CD4-positive, alpha-beta memory T cell (primary cell): ENCODE measurements at regions of chr3 and their contacts with region 1.

Region 1: DNA sequence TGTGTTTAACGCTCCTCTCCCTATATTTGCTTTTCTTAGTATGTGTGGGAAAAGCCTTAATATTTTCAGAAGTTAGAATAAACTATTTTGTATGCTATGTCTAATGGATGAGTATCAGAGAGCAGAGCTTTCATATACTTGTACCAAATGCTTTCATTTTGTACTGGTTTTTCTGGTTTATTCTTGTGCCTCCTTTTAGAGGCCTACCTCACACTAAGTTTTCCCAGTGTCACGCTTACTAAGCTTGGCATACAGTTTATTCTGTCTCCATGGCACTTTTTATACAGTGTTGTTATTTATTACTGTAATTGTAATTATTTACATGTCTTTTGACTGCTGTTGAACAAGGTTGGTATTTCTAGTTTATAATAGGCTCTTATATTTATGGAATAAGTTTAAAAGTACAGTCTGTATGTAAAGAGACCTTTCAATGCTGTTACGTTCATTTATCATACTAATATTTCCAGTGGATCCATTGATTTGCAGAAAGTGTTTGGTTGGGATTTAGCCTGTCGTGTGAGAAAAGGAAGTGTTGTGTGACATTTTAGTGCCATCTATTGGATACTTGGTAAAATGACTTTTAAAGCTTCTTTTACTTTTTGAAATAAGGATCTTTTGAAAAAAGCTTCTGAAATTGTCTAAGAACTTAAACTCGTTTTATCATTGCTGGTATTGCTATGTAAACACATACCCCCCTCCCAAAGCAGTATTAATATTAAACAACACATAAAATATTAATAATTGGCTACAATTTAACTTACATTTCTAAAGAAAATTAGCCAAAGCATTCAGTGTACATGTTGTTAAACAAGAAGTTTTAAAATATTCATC is 5.2 kb upstream of the EBLN2 start:
- DNase-seq: peak in 4 of 5 donors; percentile 28 to 47 (median 38)
- H3K4me3 ChIP-seq: no peak overlapping the region
- H3K4me3 Mint-ChIP-seq: no peak overlapping the region
- H3K27ac ChIP-seq: no peak overlapping the region
- H3K27ac Mint-ChIP-seq: peak overlapping the region in 6 of 7 donors; percentile 0 to 80 (median 33)
- H3K4me1 ChIP-seq: peaks cover 9% of the 10 kb centered on the region
- H3K4me1 Mint-ChIP-seq: peaks cover 18 to 21% (median 19%) of the 10 kb centered on the region in 4 donors
- H3K27me3 ChIP-seq: no peaks in the 10 kb centered on the region
- H3K27me3 Mint-ChIP-seq: no peaks in the 10 kb centered on the region

Region 2: GRCh38 chr3:72847751-72848702 is 208.2 kb before region 1 on chr3 and contains the start of gene SHQ1:
- CTCF ChIA-PET with region 1: interaction called, 8 read pairs
- POLR2A ChIA-PET with region 1: no interaction called
- intact Hi-C with region 1: loop called (anchors 10 kb)
- DNase-seq: peak; percentile 91 to 96 (median 92)
- H3K4me3 ChIP-seq: peak within 1 kb of the TSS; percentile 82 to 97
- H3K4me3 Mint-ChIP-seq: peak within 1 kb of the TSS; percentile 94 to 97 (median 96)
- H3K27ac ChIP-seq: peak within 1 kb of the TSS; percentile 61
- H3K27ac Mint-ChIP-seq: peak within 1 kb of the TSS; percentile 78 to 95 (median 93)
- H3K4me1 ChIP-seq: peaks cover 47% of the 10 kb centered on the region
- H3K4me1 Mint-ChIP-seq: peaks cover 38 to 60% (median 48%) of the 10 kb centered on the region in 4 donors
- H3K27me3 ChIP-seq: no peaks in the 10 kb centered on the region
- H3K27me3 Mint-ChIP-seq: peaks cover 0 to 2% of the 10 kb centered on the region in 2 donors
- total RNA-seq, gene SHQ1: 28.7 to 31.2 TPM

Region 3: DNA sequence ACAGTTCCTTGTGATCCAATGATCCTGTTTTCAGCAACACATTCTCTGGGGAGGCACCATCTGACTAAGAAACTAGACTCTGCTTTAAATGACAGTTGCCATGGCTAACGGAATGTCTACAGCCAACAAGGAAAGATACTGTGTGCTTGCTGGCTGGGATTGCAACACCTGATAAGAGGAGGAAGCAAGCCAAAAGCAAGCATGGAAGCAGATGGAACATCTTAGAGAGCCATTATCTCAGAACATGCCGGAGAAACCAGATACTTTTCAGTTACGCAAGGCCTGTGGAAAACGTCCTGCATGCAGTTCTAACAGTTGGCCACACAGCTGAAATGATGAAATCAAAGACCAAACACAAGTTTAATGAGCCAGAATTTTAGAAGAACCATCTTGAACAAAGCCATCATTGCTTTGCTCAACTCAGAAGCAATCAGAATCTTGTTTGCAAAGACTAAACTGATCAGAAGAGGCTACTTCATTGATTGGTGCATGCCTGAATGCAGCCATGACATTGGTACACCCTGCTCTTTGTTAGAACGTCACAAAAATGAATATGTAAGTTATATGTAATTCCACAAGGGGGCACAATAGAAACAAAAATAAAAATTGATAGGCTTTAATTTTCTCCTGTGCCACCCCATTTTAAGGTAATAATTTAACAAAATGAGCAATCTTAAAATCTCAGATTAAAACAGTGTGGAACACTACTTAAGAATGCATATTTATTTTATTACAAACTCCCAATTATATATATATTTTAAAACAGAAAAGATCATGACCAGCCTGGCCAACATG is 117.6 kb before region 1 on chr3:
- CTCF ChIA-PET with region 1: interaction called, 137 read pairs
- POLR2A ChIA-PET with region 1: no interaction called
- intact Hi-C with region 1: loop called (anchors 1 kb)
- DNase-seq: peak; percentile 60 to 71 (median 63)
- H3K4me3 ChIP-seq: no peak overlapping the region
- H3K4me3 Mint-ChIP-seq: no peak overlapping the region
- H3K27ac ChIP-seq: no peak overlapping the region
- H3K27ac Mint-ChIP-seq: peak overlapping the region in 1 of 7 donors; percentile 35
- H3K4me1 ChIP-seq: no peaks in the 10 kb centered on the region
- H3K4me1 Mint-ChIP-seq: peaks cover 0 to 2% (median 0%) of the 10 kb centered on the region in 4 donors
- H3K27me3 ChIP-seq: no peaks in the 10 kb centered on the region
- H3K27me3 Mint-ChIP-seq: peaks cover 0 to 8% of the 10 kb centered on the region in 2 donors

Region 4: DNA sequence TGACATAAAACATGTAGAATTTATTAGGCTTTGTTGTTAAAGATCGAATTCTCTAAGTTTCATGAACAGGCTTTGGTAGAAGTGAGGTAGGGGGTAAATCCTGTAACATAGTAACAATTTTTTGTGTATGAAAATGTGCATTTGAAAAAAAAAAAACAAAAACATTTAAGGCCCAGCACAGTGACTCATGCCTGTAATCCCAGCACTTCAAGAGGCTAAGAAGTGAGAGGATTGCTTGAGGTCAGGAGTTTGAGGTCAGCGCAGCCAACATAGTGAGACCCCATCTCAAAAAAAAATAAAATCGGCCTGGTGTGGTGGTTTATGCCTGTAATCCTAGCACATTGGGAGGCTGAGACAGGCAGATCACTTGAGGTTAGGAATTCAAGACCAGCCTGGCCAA is 86.5 kb before region 1 on chr3:
- CTCF ChIA-PET with region 1: no interaction called
- POLR2A ChIA-PET with region 1: no interaction called
- intact Hi-C with region 1: no loop called
- DNase-seq: no peak
- H3K4me3 ChIP-seq: no peak overlapping the region
- H3K4me3 Mint-ChIP-seq: no peak overlapping the region
- H3K27ac ChIP-seq: no peak overlapping the region
- H3K27ac Mint-ChIP-seq: no peak overlapping the region
- H3K4me1 ChIP-seq: peaks cover 22% of the 10 kb centered on the region
- H3K4me1 Mint-ChIP-seq: peaks cover 16 to 27% (median 16%) of the 10 kb centered on the region in 4 donors
- H3K27me3 ChIP-seq: no peaks in the 10 kb centered on the region
- H3K27me3 Mint-ChIP-seq: no peaks in the 10 kb centered on the region

Region 5: GRCh38 chr3:73024836-73025235 is 31.4 kb before region 1 on chr3:
- CTCF ChIA-PET with region 1: interaction called, 5 read pairs
- POLR2A ChIA-PET with region 1: no interaction called
- intact Hi-C with region 1: loop called (anchors 5 kb)
- DNase-seq: no peak
- H3K4me3 ChIP-seq: no peak overlapping the region
- H3K4me3 Mint-ChIP-seq: peak overlapping the region in 3 of 8 donors; percentile 18 to 52 (median 22)
- H3K27ac ChIP-seq: no peak overlapping the region
- H3K27ac Mint-ChIP-seq: peak overlapping the region in 3 of 7 donors; percentile 29 to 79 (median 42)
- H3K4me1 ChIP-seq: peaks cover 75% of the 10 kb centered on the region
- H3K4me1 Mint-ChIP-seq: peaks cover 54 to 87% (median 71%) of the 10 kb centered on the region in 4 donors
- H3K27me3 ChIP-seq: no peaks in the 10 kb centered on the region
- H3K27me3 Mint-ChIP-seq: no peaks in the 10 kb centered on the region

Region 6: DNA sequence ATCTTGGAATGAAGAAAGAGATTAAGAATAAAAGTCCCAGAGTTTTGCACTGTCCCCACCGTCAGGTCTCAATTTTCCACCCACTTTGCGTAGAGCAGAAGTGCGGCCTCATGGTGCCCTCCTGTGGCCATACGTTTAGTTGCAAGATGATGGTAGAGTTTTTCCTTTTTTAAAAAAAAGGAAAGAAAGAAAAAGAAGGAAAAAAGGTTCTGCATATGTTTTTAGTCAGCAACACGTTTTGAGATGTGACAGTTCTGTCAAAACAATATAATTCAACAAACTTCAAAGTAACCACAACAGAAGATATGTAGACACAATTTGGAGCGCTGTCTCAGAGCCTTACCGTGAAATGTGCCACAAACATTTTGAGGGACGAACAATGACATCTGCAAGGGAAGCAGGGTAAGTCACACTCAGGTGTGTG is 29.9 kb after region 1 on chr3:
- CTCF ChIA-PET with region 1: interaction called, 19 read pairs
- POLR2A ChIA-PET with region 1: no interaction called
- intact Hi-C with region 1: loop called (anchors 1 kb)
- DNase-seq: peak in 4 of 5 donors; percentile 33 to 41 (median 39)
- H3K4me3 ChIP-seq: no peak overlapping the region
- H3K4me3 Mint-ChIP-seq: peak overlapping the region in 6 of 8 donors; percentile 39 to 79 (median 62)
- H3K27ac ChIP-seq: no peak overlapping the region
- H3K27ac Mint-ChIP-seq: peak overlapping the region in 3 of 7 donors; percentile 10 to 68 (median 48)
- H3K4me1 ChIP-seq: peaks cover 6% of the 10 kb centered on the region
- H3K4me1 Mint-ChIP-seq: peaks cover 5 to 8% (median 5%) of the 10 kb centered on the region in 4 donors
- H3K27me3 ChIP-seq: no peaks in the 10 kb centered on the region
- H3K27me3 Mint-ChIP-seq: no peaks in the 10 kb centered on the region